ENCODE measurements at regions of chr14 and their contacts with region 1.

Region 1: DNA sequence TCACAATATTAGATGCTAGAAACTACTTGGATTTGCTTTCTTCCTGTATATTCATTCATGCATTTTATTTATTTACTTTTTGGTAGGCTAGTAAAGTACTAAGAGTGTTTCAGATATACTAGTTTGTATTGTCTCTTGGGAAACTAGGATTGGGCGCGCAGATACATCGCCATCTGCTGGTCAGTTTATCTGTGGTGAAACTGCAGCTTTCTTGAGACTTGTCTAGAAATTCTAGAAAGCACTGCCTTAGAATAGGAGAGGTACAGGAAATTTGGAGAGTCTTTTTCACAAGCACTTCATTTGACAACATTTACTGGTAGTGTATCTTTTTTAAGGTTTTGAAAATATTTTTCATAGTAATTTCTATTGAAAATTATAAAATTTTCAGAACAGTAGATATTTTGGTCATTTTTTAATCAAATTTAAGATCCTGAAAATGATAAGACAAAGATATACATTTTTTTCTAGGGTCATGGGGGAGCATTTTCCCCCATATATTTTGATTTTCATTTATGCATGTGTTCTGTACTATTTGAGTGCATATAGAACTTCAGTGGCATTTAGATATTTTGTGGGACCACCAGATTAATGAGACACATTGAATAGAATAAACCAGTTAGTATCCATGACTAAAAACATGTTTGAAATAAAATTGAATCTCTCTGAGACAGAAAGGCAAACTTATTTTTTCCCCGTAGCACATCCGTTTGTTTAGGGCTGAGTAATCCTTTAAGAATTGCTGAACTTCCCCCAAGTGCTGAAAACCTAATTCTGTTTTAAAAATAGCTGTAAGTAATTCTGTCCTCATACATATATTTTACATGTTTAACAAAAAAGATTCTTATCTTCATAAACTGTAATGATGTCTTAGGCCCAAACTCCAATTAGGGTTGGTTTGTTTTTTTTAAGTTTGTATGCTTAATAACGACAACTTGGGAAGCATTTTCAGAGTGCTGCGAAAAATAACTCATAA is 44.5 kb downstream of the SLC38A6 start:
- DNase-seq: peak; percentile 46
- CTCF ChIP-seq: peak; percentile 61

Region 2: DNA sequence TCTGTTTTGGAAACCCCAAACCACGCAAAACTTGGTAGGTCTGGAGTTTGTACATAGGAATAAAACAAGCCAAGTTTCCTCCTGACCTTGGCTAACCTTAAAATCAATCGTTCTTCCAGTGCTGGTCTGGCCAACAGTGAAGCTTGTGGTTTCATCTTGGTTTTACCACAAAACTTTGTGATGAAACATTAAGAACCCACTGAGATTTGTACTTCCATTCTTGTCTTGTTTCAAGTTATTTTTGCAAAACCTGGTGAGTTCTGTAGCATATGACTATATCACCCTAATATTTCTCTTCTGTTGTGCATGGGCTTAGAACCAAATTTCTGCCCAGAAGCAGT is 402.6 kb before region 1 on chr14:
- in situ Hi-C with region 1: loop called (anchors 10 kb)
- DNase-seq: no peak
- CTCF ChIP-seq: no peak

Region 3: DNA sequence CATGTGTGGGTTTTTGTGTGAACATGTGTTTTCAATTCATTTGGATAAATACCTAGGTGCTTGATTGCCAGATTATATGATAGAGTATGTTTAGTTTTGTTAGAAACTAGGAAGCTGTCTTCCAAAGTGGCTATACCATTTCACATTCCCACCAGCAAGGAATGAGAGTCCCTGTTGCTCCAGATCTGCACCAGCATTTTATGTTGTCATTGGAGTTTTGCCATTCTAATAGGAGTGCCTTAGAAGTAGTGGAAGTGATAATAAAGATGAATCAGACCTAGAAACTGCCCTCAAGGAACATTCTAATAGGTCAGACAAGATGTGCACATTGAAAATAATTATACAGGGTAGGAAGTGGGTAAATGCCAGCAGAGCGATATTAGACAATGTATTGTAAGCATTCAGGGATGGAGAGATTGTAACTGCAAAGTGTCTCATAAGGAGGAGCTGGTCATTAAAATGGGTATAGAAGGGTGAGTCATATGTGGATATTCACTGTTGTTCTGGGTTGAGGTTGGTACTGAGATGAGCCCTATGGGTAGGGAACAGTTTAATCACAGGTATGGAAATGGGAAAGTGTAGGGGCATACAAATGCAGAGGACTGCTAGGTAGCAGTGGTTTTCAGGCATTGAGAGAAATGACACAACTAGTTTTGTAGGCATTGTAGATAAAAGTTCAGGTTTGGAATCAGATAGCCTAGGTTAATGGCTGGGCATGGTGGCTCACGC is 219.5 kb before region 1 on chr14:
- in situ Hi-C with region 1: no loop called
- DNase-seq: no peak
- CTCF ChIP-seq: no peak

Region 4: GRCh38 chr14:60965402-60965801 is 60.1 kb before region 1 on chr14:
- in situ Hi-C with region 1: no loop called
- DNase-seq: no peak
- CTCF ChIP-seq: no peak

Region 5: DNA sequence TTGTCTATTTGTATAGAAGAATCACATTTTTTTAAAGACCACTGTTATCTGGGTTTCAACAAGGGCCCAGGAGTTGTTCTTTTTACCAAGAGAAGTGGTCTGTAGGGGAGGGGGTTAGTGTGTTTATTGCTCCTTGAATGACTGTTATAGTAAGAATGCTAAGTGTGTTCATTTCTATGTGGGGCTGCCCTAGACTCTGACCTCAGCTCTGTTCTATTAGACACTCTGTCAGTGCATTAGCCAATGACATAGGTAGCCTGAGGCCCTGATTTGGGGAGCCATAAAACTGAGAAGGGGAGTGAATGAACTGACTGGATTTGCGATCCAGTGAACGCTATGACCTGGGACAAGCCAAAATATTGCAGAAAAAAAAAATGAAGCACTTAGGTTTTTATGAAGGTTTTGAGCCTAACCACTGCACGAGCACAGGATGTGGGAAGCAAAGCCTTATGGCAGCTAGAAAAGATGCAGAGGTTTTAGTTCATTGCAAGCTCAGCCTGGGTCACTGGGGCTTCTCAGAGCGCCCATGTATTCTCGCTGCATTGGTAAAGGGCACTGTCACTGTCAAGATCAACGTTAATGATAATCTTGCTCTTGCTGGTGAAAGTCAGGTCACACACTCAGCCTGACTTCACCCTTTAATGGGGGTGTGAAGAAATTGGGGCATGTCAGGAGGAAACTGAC is 359.6 kb after region 1 on chr14:
- in situ Hi-C with region 1: no loop called
- DNase-seq: no peak
- CTCF ChIP-seq: no peak

Measured in GM13976 (cell line).